Activated CD4-positive, alpha-beta T cell treated with anti-CD3 and anti-CD28 coated beads for 36 hours (primary cell): ENCODE measurements at regions of chr18 and their contacts with region 1.

Region 1: DNA sequence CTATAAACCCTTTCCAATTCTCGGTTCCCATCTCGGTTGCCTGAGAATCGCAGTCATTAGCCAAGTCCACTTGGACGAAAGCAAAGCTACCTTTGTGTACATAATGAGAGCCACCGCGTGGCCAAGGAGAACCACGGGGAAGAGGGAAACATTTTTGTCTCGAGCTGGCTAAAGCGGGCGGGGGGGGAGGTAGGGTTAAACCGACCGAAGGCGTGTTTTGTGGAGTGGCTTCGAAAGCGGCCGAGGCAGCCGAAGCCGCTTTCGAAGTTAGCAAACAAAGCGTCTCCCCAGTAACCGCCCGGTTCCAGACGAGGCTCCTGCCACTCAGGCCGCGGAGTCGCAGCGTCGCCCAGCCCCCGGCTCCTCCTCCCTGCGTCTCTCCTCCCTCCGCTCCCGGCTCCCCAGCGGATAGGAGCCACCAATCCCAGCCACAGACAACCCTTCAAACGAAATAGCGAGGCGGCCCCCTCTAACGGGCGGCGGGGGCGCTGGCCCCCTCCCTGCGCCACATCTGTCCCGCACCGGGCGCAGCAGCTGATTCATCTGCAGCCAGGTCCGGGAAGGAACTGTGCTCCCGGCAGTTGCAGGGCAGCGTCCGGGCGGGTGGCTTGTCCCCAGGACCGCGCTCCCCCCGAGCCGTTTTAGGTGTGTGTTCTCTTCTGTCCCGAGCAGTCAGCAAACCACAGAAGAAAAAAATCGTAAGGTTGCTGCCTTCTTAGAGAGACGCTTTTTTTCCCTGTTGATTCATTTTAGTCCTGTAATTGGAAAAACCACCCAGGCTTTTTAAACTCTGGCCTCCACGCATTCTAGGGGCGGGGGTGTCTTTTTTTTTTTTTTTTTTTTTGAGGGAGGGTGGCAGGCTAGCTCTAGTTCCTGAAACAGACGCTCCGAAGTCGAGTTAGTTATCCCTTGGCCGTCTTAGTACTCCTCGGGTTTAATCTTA is 1.8 kb upstream of the TGIF1 start:
- DNase-seq: peak; percentile 94
- ATAC-seq: peak; percentile 69
- H3K4me3 Mint-ChIP-seq: peak overlapping the region; percentile 94
- H3K27ac Mint-ChIP-seq: peak overlapping the region; percentile 97
- H3K4me1 Mint-ChIP-seq: peaks cover 26% of the 10 kb centered on the region
- H3K27me3 Mint-ChIP-seq: no peaks in the 10 kb centered on the region

Region 2: DNA sequence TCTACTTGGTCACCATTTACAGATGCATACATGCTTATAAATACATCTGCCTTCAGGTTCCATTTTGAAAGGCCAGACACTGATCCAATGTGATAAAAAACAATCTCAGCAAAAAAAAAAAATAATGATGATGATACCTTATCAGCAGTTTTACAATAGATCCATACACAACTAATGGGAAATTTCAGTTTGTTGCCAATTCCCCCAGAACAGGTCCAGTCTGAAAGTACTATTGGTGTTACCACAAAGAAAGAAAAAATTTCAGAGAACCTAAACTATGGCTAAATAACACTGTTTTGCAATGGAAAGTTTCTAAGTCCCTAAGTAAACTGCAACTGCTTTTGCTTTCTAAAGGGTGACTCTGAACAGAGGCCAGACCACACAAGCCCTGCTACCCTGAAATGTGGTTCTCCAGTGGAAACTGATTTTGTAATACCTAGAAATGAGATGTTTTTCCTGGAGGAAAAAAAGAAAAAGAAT is 489.3 kb before region 1 on chr18:
- CTCF ChIA-PET with region 1: no interaction called
- POLR2A ChIA-PET with region 1: no interaction called
- intact Hi-C with region 1: loop called (anchors 5 kb)
- DNase-seq: peak; percentile 63
- ATAC-seq: no peak
- H3K4me3 Mint-ChIP-seq: peak overlapping the region; percentile 71
- H3K27ac Mint-ChIP-seq: peak overlapping the region; percentile 100
- H3K4me1 Mint-ChIP-seq: peaks cover 90% of the 10 kb centered on the region
- H3K27me3 Mint-ChIP-seq: no peaks in the 10 kb centered on the region

Region 3: GRCh38 chr18:3281456-3282400 is 166.4 kb before region 1 on chr18:
- CTCF ChIA-PET with region 1: interaction called, 4 read pairs
- POLR2A ChIA-PET with region 1: no interaction called
- intact Hi-C with region 1: loop called in 1 of 2 experiments (anchors 5 kb)
- DNase-seq: no peak
- ATAC-seq: peak; percentile 90
- H3K4me3 Mint-ChIP-seq: no peak overlapping the region
- H3K27ac Mint-ChIP-seq: no peak overlapping the region
- H3K4me1 Mint-ChIP-seq: peaks cover 10% of the 10 kb centered on the region
- H3K27me3 Mint-ChIP-seq: no peaks in the 10 kb centered on the region

Region 4: DNA sequence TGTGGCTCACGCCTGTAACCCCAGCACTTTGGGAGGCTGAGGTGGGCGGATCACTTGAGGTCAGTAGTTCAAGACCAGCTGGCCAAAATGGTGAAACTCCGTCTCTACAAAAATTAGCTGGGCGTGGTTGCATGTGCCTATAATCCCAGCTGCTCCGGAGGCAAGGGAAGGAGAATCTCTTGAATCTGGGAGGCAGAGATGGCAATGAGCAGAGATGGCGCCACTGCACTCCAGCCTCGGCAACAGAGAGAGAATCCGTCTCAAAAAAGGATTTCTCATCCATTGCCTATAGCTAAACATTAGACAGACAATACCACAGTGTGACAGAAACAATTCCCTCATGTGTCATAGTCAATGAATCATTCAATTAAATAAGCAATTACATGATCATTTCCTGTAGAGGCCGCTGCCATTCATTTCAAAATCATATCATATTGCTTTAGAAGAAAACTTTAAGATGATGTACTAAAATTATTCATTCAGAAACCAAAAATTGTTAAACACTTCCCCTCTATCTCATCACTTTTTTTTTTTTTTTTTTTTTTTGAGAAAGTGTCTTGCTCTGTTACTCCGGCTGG is 67.7 kb before region 1 on chr18:
- CTCF ChIA-PET with region 1: interaction called, 3 read pairs
- POLR2A ChIA-PET with region 1: interaction called, 4 read pairs
- intact Hi-C with region 1: loop called (anchors 1 to 2 kb)
- DNase-seq: peak; percentile 49
- ATAC-seq: peak; percentile 97
- H3K4me3 Mint-ChIP-seq: no peak overlapping the region
- H3K27ac Mint-ChIP-seq: no peak overlapping the region
- H3K4me1 Mint-ChIP-seq: peaks cover 10% of the 10 kb centered on the region
- H3K27me3 Mint-ChIP-seq: peaks cover 10% of the 10 kb centered on the region

Region 5: GRCh38 chr18:3593904-3594661 is 145.9 kb after region 1 on chr18:
- CTCF ChIA-PET with region 1: interaction called, 54 read pairs
- POLR2A ChIA-PET with region 1: interaction called, 58 read pairs
- intact Hi-C with region 1: loop called (anchors 1 kb)
- DNase-seq: peak; percentile 92
- ATAC-seq: peak; percentile 81
- H3K4me3 Mint-ChIP-seq: peak overlapping the region; percentile 92
- H3K27ac Mint-ChIP-seq: peak overlapping the region; percentile 99
- H3K4me1 Mint-ChIP-seq: peaks cover 58% of the 10 kb centered on the region
- H3K27me3 Mint-ChIP-seq: no peaks in the 10 kb centered on the region